Psoas muscle (tissue), 8 donors: ENCODE measurements at regions of chr16 and their contacts with region 1.

Region 1: GRCh38 chr16:69286941-69287713 is 24.0 kb upstream of the VPS4A start:
- DNase-seq: peak; percentile 79 to 91
- ATAC-seq: peak; percentile 91 to 93 (median 92)
- H3K4me3 ChIP-seq: no peak overlapping the region
- H3K27ac ChIP-seq: peak overlapping the region; percentile 71
- H3K4me1 ChIP-seq: peaks cover 17% of the 10 kb centered on the region
- H3K27me3 ChIP-seq: no peaks in the 10 kb centered on the region
- CTCF ChIP-seq: peak; percentile 71

Region 2: GRCh38 chr16:69150146-69150865 is 136.8 kb before region 1 on chr16:
- intact Hi-C with region 1: loop called (anchors 2 to 5 kb)
- DNase-seq: no peak
- ATAC-seq: peak; percentile 53 to 81 (median 76)
- H3K4me3 ChIP-seq: no peak overlapping the region
- H3K27ac ChIP-seq: no peak overlapping the region
- H3K4me1 ChIP-seq: no peaks in the 10 kb centered on the region
- H3K27me3 ChIP-seq: no peaks in the 10 kb centered on the region
- CTCF ChIP-seq: peak; percentile 79

Region 3: DNA sequence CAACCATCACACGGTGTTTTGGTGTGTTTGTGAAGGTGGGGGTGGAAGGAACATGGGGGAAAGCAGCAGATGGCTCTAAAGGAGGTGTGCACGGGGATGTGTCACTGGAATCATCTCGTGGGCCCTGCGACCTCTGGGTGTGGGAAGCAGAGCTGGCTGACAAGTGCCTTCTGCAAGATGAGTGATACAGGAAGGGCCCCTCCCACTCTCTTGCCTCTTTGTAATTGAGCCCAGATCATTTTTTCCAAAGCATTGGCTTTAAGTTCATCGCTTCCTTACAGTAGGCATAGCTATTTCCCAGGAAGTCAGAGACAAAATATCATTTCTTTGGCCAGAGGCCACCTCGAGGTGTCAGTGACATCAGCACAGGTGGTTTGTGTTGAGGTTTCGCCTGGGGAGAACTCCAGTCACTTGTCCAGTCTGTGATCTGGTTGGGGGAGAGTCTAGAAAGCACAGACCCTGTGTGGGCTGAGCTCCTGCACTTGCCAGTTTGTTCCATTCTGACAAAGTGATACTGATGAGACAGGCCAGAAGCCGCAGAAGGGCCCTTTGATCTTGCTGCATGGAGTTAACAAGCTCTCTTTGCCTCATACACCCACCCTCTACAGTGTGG is 120.8 kb before region 1 on chr16:
- intact Hi-C with region 1: no loop called
- DNase-seq: no peak
- ATAC-seq: no peak
- H3K4me3 ChIP-seq: no peak overlapping the region
- H3K27ac ChIP-seq: no peak overlapping the region
- H3K4me1 ChIP-seq: no peaks in the 10 kb centered on the region
- H3K27me3 ChIP-seq: no peaks in the 10 kb centered on the region
- CTCF ChIP-seq: no peak

Region 4: GRCh38 chr16:69186642-69187445 is 100.3 kb before region 1 on chr16 and contains the start of gene SNTB2:
- intact Hi-C with region 1: loop called in 1 of 2 experiments (anchors 5 kb)
- DNase-seq: peak; percentile 93 to 96
- ATAC-seq: peak; percentile 96 to 97 (median 96)
- H3K4me3 ChIP-seq: peak within 1 kb of the TSS; percentile 82
- H3K27ac ChIP-seq: peak within 1 kb of the TSS; percentile 80
- H3K4me1 ChIP-seq: peaks cover 26% of the 10 kb centered on the region
- H3K27me3 ChIP-seq: no peaks in the 10 kb centered on the region
- CTCF ChIP-seq: no peak
- total RNA-seq, gene SNTB2: 12.6 to 19.4 (median 14.7) TPM